ENCODE measurements at regions of chr22 and their contacts with region 1.

Region 1: GRCh38 chr22:39300186-39300830 is 19.1 kb downstream of the RPL3 start:
- DNase-seq: peak; percentile 36 to 58
- ATAC-seq: peak; percentile 52 to 79 (median 63)
- H3K4me3 ChIP-seq: peak overlapping the region in 9 of 10 donors; percentile 10 to 36 (median 16)
- H3K27ac ChIP-seq: peak overlapping the region; percentile 32 to 87 (median 78)
- H3K4me1 ChIP-seq: peaks cover 11 to 54% (median 50%) of the 10 kb centered on the region in 9 donors
- H3K27me3 ChIP-seq: no peaks in the 10 kb centered on the region
- CTCF ChIP-seq: peak in 3 of 9 donors; percentile 5 to 36 (median 31)

Region 2: DNA sequence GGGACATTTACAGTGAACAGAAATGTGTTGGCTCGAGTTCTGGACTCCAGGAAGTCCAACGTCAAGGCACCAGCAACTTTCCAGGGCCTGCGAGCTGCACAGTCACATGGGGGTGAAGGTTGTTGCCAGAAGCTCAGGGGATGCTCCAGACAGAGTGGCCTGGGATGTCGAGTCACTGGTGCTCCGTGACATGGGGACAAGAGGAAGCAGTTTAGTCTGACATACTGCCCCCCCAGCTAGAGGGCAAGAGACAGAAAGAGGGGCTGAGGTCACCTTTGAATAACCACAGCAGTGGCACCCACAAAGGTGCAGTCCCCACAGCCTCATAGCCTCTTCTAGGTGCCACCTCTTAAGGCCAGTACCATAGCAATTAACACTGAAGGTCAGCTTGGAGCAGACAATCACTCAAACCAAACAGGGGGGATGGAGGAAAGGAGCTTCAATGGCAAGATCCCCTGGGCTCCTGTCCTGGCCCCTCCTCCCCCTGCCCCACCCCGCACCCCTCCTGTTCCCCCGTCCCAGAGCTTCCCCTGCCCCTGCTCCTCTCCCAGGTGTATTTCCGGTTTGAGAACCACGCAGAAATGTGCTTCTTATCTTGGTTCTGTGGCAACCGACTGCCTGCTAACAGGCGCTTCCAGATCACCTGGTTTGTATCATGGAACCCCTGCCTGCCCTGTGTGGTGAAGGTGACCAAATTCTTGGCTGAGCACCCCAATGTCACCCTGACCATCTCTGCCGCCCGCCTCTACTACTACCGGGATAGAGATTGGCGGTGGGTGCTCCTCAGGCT is 275.6 kb before region 1 on chr22:
- intact Hi-C with region 1: no loop called
- DNase-seq: peak in 1 of 2 donors; percentile 22
- ATAC-seq: no peak
- H3K4me3 ChIP-seq: no peak overlapping the region
- H3K27ac ChIP-seq: no peak overlapping the region
- H3K4me1 ChIP-seq: peaks cover 0 to 22% (median 15%) of the 10 kb centered on the region in 9 donors
- H3K27me3 ChIP-seq: no peaks in the 10 kb centered on the region
- CTCF ChIP-seq: no peak

Region 3: DNA sequence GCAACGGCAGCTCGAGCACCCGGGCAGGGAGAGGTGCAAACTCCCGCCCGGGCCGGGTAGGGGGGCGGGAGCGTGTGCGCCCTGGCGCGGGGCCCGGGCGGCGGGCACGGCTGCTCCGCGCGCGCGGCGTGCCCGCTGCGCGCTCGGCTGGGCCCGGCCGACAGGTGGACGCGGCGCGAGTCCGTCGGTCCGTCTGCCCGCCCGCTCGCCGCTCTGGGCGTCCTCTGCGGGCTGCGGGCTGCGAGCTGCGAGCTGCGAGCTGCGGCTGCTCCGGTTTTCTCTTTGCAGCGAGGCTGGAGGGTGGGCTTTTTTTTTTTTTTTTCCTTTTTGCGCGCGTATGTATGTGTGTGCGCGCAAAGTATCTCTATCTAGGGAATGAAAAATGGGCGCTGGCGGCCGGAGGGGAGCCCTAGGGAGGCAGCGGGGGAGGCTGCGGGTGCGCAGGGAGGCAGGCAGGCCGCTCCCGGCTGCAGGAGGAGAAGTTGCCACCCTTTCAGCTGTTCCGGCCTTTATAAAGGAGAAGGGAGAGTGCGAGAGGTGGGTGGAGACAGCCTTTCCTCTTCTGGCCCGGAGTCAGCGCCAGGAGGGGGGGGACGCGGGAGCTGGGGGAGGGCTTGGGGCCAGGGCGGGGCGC is 55.7 kb before region 1 on chr22 and contains the start of gene PDGFB:
- intact Hi-C with region 1: loop called in 6 of 10 experiments (anchors 5 to 10 kb)
- DNase-seq: peak; percentile 66 to 79
- ATAC-seq: peak; percentile 24 to 80 (median 66)
- H3K4me3 ChIP-seq: peak within 1 kb of the TSS; percentile 62 to 88 (median 79)
- H3K27ac ChIP-seq: peak within 1 kb of the TSS; percentile 80 to 98 (median 92)
- H3K4me1 ChIP-seq: peaks cover 10 to 69% (median 49%) of the 10 kb centered on the region in 9 donors
- H3K27me3 ChIP-seq: peaks cover 0 to 69% (median 0%) of the 10 kb centered on the region in 7 donors
- CTCF ChIP-seq: no peak
- total RNA-seq, gene PDGFB: 9.9 to 45.6 (median 18.5) TPM

Region 4: GRCh38 chr22:39278040-39278439 is 22.3 kb before region 1 on chr22:
- intact Hi-C with region 1: loop called in 1 of 10 experiments (anchors 2 kb)
- DNase-seq: peak; percentile 71 to 75
- ATAC-seq: peak; percentile 49 to 82 (median 66)
- H3K4me3 ChIP-seq: peak overlapping the region in 1 of 10 donors; percentile 12
- H3K27ac ChIP-seq: peak overlapping the region in 9 of 10 donors; percentile 52 to 89 (median 77)
- H3K4me1 ChIP-seq: peaks cover 5 to 68% (median 53%) of the 10 kb centered on the region in 9 donors
- H3K27me3 ChIP-seq: no peaks in the 10 kb centered on the region
- CTCF ChIP-seq: peak in 1 of 9 donors; percentile 27

Region 5: GRCh38 chr22:39388261-39389011 is 88.1 kb after region 1 on chr22:
- intact Hi-C with region 1: no loop called
- DNase-seq: peak; percentile 80 to 85
- ATAC-seq: peak; percentile 88 to 97 (median 94)
- H3K4me3 ChIP-seq: peak overlapping the region; percentile 32 to 73 (median 63)
- H3K27ac ChIP-seq: peak overlapping the region in 1 of 10 donors; percentile 71
- H3K4me1 ChIP-seq: peaks cover 0 to 19% (median 9%) of the 10 kb centered on the region in 9 donors
- H3K27me3 ChIP-seq: peaks cover 0 to 6% (median 0%) of the 10 kb centered on the region in 7 donors
- CTCF ChIP-seq: no peak

Measured in heart right ventricle (tissue), 16 donors.